ENCODE measurements at regions of chr5 and their contacts with region 1.

Region 1: DNA sequence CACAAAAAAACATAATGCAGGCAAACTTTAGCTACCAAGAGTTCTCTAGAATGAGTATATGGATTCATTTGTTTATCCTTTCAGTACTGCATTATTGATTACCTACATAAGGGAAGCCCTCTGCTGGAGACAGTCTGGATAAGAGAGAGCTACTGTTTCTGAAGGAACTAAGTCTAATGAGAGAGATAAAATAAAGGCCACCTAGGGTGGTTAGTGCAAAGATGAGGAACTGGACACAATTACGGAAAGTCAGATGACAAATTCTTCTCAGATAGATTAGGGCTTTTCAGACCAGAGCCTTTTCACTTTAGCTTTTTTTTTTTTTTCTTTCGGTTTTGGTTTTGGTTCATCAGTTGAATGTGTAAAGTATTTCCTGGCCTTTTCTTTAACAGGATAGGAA is 31.3 kb downstream of the ISOC1 start:
- DNase-seq: peak; percentile 59
- H3K4me3 Mint-ChIP-seq: peak overlapping the region; percentile 59
- H3K27ac Mint-ChIP-seq: peak overlapping the region; percentile 86
- H3K4me1 Mint-ChIP-seq: peaks cover 10% of the 10 kb centered on the region
- H3K27me3 Mint-ChIP-seq: no peaks in the 10 kb centered on the region

Region 2: GRCh38 chr5:129094087-129094923 is 31.5 kb before region 1 on chr5 and contains the start of gene ISOC1:
- intact Hi-C with region 1: loop called (anchors 1 kb)
- DNase-seq: peak; percentile 98
- H3K4me3 Mint-ChIP-seq: peak within 1 kb of the TSS; percentile 86
- H3K27ac Mint-ChIP-seq: peak within 1 kb of the TSS; percentile 63
- H3K4me1 Mint-ChIP-seq: peaks cover 25% of the 10 kb centered on the region
- H3K27me3 Mint-ChIP-seq: peaks cover 22% of the 10 kb centered on the region
- total RNA-seq, gene ISOC1: 29.4 and 31.6 TPM in 2 replicates

Region 3: DNA sequence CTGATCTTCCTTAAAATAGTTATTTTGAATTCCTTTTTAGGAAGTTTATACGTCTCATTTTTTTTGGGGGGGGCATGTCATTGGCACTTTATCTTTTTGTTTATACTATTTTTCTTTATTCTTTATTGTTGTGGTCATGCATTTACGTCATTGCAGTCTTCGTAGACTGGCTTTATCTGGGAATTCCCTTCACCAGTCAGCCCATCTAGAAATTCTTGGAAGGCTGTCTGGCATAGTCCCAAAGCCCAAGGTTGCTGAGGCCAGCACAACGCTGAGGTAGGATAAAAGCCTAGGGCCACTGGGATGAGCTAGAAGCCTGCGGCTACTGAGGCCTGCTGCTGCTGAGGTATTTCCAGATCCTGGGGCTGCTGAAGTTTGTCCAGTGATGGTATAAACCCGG is 90.2 kb after region 1 on chr5:
- intact Hi-C with region 1: no loop called
- DNase-seq: no peak
- H3K4me3 Mint-ChIP-seq: no peak overlapping the region
- H3K27ac Mint-ChIP-seq: no peak overlapping the region
- H3K4me1 Mint-ChIP-seq: no peaks in the 10 kb centered on the region
- H3K27me3 Mint-ChIP-seq: no peaks in the 10 kb centered on the region

Measured in activated CD4-positive, alpha-beta T cell treated with anti-CD3 and anti-CD28 coated beads, Interleukin-2, amount 10 ng/mL, durations not matched to agents 24 days and 14 days (primary cell).